GM12878 (cell line): ENCODE measurements at regions of chr11 and their contacts with region 1.

Region 1: DNA sequence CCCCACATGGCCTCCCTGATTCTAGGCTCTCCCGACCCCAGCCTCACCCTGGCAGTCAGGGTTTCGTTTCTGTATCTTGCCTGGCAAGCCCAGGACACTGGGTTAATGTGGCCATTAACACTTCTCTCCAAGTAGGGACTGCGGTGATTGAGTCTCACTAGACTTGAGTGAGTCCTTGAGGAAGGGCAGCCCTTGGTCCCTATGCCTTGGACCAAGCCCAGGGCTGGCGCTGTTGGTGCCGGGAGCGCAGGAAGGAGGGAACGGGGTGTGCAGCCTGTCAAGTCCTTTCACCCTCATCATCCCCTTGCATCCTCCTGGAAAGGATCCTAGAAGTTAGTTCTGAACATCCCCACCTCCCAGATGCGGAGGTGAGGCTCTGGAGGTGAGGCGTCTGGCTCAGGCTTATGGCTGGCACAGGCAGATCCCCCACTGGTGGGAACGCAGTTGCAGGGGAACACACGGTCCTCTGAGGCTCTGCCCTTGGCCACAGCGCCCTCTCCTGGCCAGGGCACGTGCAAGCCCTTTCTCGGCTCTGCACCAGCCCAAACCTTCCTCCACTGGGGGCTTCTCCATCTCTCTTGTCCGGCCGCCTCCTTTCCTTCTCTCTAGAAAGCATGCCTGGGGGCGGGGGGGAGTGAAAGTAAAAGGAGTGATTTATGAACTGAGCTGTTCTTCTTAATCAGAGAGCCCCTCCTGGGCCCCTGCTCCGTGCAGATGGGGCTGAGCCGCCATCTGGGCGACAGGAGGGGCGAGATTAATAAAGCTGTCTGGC is 56.7 kb downstream of the TP53I11 start:
- DNase-seq: no peak
- ATAC-seq: peak; percentile 98
- H3K4me3 ChIP-seq: no peak overlapping the region
- H3K27ac ChIP-seq: no peak overlapping the region
- H3K4me1 ChIP-seq: no peaks in the 10 kb centered on the region
- H3K27me3 ChIP-seq: no peaks in the 10 kb centered on the region; a peak in 2 of 4 replicates
- CTCF ChIP-seq: peak; percentile 81 to 86 (median 83)
- EP300 ChIP-seq: no peak
- POLR2A ChIP-seq: no peak
- RAD21 ChIP-seq: peak; percentile 81

Region 2: GRCh38 chr11:44538375-44539054 is 355.5 kb before region 1 on chr11:
- CTCF ChIA-PET with region 1: no interaction called
- POLR2A ChIA-PET with region 1: no interaction called
- RAD21 ChIA-PET with region 1: no interaction called
- SMC1A ChIA-PET with region 1: no interaction called
- in situ Hi-C with region 1: no loop called
- intact Hi-C with region 1: no loop called
- DNase-seq: no peak
- ATAC-seq: peak; percentile 99
- H3K4me3 ChIP-seq: no peak overlapping the region
- H3K27ac ChIP-seq: no peak overlapping the region
- H3K4me1 ChIP-seq: no peaks in the 10 kb centered on the region
- H3K27me3 ChIP-seq: peaks cover 0 to 1% of the 10 kb centered on the region in 2 experiments; a peak in 3 of 4 replicates
- CTCF ChIP-seq: peak; percentile 94 to 96 (median 96); a peak in 5 of 6 replicates
- EP300 ChIP-seq: no peak
- POLR2A ChIP-seq: no peak
- RAD21 ChIP-seq: peak; percentile 90

Region 3: DNA sequence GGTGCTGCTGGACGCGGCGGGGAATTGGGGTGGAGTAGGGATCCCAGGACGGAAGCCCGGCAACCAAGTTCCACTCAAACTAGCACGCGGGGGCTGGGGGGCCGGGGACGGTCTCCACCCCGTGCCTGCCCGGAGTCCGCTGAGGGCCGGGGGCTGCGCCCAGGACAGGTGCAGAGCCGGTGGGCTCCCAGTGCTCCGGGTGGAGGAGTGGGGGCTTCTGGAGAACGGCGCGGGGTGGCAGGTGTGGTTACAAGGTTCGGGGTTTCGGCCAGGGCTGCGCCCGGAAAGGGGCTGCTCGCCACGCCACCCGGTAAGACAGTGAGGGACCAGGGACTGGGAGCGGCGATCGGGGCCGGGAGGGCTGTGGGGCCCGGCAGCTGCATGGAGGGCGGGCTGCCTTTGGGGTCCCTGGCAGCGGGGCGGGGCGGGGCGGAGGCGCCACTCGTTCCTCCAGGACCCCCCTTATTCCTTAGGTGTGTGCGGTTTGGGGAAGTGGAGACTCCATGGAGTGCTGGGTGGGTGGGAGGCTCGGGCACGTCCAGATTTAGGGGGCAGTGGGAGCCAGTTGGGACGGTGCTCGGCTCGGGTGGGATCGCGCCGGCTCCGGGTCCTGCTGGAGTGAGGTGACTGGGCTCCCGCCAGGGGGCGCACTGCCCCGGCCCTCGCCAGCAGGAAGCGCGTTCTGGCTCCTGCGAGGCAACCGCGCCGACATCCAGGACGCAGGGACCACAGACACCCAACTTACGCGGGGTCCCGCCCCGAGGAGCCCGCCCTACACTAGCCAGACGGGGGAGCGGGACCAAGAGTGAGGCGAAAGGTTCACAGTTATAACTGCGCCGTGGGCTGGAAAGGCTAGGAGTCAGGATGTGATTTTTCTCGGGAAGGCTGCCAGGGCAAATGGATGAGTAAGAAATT is 166.4 kb before region 1 on chr11:
- CTCF ChIA-PET with region 1: interaction called, 3 read pairs
- POLR2A ChIA-PET with region 1: no interaction called
- RAD21 ChIA-PET with region 1: interaction called, 6 read pairs
- SMC1A ChIA-PET with region 1: no interaction called
- in situ Hi-C with region 1: loop called (anchors 5 kb)
- intact Hi-C with region 1: loop called (anchors 5 kb)
- DNase-seq: no peak
- ATAC-seq: peak; percentile 90
- H3K4me3 ChIP-seq: peak overlapping the region; percentile 86
- H3K27ac ChIP-seq: no peak overlapping the region
- H3K4me1 ChIP-seq: peaks cover 11% of the 10 kb centered on the region
- H3K27me3 ChIP-seq: peaks cover 0 to 3% of the 10 kb centered on the region in 2 experiments; a peak in 3 of 4 replicates
- CTCF ChIP-seq: peak; percentile 77 to 95 (median 85)
- EP300 ChIP-seq: no peak
- POLR2A ChIP-seq: no peak
- RAD21 ChIP-seq: peak; percentile 61

Region 4: GRCh38 chr11:44943118-44943517 is 49.1 kb after region 1 on chr11:
- CTCF ChIA-PET with region 1: no interaction called
- POLR2A ChIA-PET with region 1: no interaction called
- RAD21 ChIA-PET with region 1: no interaction called
- SMC1A ChIA-PET with region 1: no interaction called
- in situ Hi-C with region 1: no loop called
- intact Hi-C with region 1: no loop called
- DNase-seq: no peak
- ATAC-seq: peak; percentile 89
- H3K4me3 ChIP-seq: no peak overlapping the region
- H3K27ac ChIP-seq: no peak overlapping the region
- H3K4me1 ChIP-seq: peaks cover 17% of the 10 kb centered on the region
- H3K27me3 ChIP-seq: peaks cover 0 to 1% of the 10 kb centered on the region in 2 experiments; a peak in 2 of 4 replicates
- CTCF ChIP-seq: no peak
- EP300 ChIP-seq: no peak
- POLR2A ChIP-seq: no peak
- RAD21 ChIP-seq: no peak